Heart right ventricle (tissue), 16 donors: ENCODE measurements at regions of chr18 and their contacts with region 1.

Region 1: DNA sequence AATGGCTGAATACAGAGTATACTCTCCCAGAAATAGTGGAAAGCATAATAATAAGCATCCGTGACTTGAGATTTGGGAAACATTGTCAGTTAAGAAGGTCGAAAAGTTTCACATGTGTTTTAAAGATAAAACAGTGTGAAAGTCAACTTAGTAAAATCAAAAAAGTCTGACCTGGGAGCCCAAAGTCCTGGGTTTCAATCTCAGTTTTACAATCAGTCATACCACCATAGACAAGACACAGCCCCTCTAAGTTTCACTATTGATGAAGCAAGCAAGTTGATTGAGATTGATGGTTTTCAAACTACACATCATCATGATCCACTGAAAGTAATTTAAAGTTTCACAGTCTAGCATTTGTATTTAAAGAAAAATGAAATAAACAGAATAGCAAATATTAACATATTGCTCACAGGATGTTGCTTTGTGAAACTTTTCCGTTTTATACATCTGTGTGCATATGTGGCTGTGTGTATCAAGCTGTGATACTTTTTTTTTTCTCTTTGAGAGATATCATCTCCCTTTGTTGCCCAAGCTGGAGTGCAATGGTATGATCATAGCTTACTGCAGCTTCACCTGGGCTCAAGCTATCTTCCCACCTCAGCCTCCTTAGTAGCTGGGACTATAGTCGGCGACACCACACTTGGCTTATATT is 71.1 kb downstream of the PIK3C3 start:
- DNase-seq: no peak
- ATAC-seq: no peak
- H3K4me3 ChIP-seq: no peak overlapping the region
- H3K27ac ChIP-seq: no peak overlapping the region
- H3K4me1 ChIP-seq: no peaks in the 10 kb centered on the region
- H3K27me3 ChIP-seq: no peaks in the 10 kb centered on the region
- CTCF ChIP-seq: no peak

Region 2: DNA sequence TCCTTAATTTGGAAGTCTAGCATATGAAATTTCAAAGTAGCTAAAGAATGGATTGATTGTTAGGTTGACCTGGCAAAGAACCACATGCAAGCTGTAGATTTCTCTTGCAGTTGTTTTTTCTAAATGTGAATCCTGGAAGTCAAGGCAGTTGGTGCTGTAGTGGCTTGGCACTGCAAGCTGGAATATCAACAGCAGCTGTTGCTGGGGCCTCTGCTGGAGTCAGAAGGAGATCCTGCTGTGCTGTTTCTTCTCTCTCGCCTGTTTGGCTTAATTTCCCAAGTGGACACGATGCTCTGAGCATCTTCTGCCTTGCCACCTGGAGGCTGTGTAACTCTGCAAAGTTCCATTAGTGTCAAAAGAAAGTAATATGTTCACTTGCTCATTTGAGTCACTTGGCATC is 58.4 kb before region 1 on chr18:
- intact Hi-C with region 1: loop called in 1 of 10 experiments (anchors 2 kb)
- DNase-seq: no peak
- ATAC-seq: peak in 4 of 8 donors; percentile 30 to 58 (median 44)
- H3K4me3 ChIP-seq: no peak overlapping the region
- H3K27ac ChIP-seq: no peak overlapping the region
- H3K4me1 ChIP-seq: peaks cover 6 to 44% (median 34%) of the 10 kb centered on the region in 9 donors
- H3K27me3 ChIP-seq: no peaks in the 10 kb centered on the region
- CTCF ChIP-seq: no peak

Region 3: GRCh38 chr18:42072407-42072806 is 46.3 kb after region 1 on chr18:
- intact Hi-C with region 1: no loop called
- DNase-seq: no peak
- ATAC-seq: no peak
- H3K4me3 ChIP-seq: no peak overlapping the region
- H3K27ac ChIP-seq: no peak overlapping the region
- H3K4me1 ChIP-seq: no peaks in the 10 kb centered on the region
- H3K27me3 ChIP-seq: no peaks in the 10 kb centered on the region
- CTCF ChIP-seq: no peak

Region 4: DNA sequence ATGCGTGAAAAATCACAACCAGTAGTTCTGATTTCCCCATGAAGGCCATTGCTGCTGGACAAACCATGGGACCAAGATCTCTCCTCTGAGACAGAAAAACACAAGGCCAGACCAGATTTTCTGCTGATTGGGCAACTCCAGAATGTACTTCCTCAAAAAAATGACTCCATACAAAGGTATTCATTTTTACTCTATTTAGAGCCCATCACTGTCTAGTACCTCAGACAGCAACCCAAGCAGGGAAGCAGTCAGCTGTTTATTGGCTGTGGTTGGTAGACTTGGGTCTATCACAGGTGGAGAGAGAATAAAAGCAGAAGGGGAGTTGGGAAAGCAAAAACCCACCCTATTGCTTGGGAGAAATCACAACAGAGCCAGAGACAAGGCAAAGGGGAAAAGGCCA is 148.8 kb after region 1 on chr18:
- intact Hi-C with region 1: no loop called
- DNase-seq: no peak
- ATAC-seq: no peak
- H3K4me3 ChIP-seq: no peak overlapping the region
- H3K27ac ChIP-seq: no peak overlapping the region
- H3K4me1 ChIP-seq: no peaks in the 10 kb centered on the region
- H3K27me3 ChIP-seq: no peaks in the 10 kb centered on the region
- CTCF ChIP-seq: no peak